ENCODE measurements at regions of chr1 and their contacts with region 1.

Region 1: DNA sequence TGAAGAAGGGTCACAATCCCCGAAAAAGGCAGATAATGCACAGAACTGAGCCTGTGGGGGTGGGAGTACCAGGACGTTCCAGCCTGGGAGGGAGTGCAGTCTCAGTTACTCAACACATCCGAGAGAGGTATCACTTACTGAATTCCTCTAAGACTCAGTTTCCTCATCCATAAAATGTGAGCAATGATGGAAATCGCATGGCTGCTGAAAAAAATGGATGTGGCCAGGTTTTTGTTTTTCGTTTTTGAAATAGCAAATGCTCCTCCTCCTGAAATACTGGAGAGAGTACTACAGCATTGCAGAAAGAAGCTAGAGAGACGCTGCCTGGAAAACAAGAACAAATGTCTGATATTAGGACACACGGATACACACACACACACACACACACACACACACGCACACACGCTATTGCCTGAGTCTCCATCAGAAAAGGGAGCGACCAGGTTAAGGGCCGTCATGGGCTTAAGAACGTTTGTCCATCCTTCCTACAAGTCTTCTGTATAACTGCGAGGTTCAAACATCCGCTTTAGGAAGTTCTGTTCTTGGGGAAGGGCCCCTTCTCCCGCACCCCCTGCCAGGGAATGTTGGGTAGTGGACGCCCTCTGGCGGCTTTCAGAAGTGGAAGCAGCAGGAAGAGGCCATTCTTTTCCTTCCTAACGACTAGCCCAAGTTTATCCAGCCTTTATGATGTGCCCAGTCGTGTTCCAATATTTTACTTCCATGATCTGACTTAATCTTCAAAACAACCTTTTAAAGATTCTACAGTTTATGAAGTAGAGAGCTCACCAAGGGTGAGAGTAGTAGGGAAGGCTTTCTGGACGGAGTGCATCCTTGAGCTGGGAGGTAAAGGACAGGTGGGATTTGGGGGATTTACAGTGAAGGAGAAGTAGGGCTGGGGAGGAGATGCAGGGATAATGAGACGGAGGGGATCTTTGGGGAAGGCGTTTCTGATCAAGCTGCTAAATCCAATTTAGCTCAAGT is 699 bp upstream of the NES start:
- DNase-seq: peak; percentile 80
- ATAC-seq: peak; percentile 84

Region 2: DNA sequence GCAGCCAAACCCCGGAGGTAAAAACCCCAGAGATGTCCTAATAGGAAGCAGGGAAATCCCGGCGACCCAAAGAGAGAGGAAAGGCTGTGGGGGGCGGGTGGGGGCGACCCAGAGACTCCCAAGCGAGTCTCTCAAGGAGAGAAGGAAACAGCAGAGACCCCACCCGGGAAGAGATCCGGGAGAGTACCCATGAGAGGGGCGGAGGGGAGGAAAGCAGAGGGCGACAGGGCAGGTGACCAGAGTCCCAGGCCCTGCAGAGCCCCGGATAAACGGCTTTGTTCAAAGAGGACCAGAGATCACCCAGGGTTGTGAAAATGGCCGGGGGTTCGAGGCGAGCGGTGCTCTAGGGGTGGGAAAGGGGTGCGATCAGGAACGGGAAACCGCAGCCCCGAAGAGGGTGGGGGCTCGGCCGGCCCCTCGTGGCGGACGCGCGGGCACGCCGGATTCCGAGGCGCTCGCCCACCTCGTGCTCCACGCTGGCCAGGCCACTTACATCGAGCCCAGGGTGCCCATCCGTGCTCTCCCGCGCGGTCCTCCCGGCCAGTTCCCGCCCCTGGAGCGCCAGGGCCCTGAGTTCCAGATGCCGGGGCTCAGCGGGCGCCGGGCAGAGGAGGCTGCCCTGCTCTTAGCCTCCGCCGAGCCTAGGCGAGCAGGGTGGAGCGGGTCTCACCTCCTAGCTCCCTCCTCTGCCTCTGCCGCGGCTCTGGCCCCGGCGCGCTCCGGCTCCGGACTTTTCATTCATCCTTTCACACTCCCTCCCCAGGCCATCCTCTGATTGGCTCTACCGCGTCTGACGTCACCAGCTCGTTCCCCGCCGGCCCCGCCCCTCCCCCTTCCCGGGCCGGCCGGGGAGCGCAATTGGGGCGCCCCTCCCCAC is 256.6 kb before region 1 on chr1:
- intact Hi-C with region 1: no loop called
- DNase-seq: peak; percentile 78
- ATAC-seq: peak; percentile 91

Region 3: DNA sequence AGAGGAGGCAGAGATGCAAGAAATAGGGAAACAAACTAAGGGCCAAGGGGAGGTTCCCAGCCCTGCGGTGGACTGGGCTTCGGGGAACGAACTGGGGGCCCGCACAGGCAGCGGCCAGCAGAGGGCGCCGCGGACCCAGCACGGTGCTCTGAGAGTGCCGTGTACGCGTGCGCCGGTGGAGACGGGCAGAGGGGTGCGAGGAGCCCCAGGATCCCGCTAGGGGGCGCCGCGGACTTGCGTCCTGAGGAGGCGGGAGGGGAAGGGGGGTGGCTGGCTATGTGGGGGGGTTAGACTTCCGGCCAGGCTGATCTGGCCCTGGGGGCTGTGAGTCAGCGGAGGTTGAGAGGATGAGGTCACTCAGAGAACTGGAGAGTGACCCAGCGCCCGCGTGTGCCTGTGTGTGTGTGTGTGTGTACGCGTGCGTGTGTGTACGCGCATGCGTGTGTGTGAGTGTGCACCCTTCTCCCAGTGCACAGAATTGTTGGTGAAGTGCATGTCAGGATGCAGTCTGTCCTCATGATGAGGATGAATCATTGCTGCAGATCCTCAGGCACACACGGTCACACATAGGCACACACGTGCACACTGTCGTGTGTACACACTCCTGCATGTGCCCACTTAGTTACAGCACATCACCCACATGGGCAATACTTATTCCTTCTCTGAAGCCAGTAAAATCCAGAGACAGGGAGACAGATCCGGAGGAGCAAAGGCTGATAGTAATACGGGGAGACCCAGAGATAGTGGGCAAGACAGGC is 17.7 kb before region 1 on chr1:
- intact Hi-C with region 1: loop called (anchors 2 kb)
- DNase-seq: peak; percentile 98
- ATAC-seq: peak; percentile 92

Region 4: GRCh38 chr1:156866249-156866909 is 188.5 kb after region 1 on chr1:
- intact Hi-C with region 1: no loop called
- DNase-seq: no peak
- ATAC-seq: no peak